Kidney (tissue), 22 donors: ENCODE measurements at regions of chr14 and their contacts with region 1.

Region 1: DNA sequence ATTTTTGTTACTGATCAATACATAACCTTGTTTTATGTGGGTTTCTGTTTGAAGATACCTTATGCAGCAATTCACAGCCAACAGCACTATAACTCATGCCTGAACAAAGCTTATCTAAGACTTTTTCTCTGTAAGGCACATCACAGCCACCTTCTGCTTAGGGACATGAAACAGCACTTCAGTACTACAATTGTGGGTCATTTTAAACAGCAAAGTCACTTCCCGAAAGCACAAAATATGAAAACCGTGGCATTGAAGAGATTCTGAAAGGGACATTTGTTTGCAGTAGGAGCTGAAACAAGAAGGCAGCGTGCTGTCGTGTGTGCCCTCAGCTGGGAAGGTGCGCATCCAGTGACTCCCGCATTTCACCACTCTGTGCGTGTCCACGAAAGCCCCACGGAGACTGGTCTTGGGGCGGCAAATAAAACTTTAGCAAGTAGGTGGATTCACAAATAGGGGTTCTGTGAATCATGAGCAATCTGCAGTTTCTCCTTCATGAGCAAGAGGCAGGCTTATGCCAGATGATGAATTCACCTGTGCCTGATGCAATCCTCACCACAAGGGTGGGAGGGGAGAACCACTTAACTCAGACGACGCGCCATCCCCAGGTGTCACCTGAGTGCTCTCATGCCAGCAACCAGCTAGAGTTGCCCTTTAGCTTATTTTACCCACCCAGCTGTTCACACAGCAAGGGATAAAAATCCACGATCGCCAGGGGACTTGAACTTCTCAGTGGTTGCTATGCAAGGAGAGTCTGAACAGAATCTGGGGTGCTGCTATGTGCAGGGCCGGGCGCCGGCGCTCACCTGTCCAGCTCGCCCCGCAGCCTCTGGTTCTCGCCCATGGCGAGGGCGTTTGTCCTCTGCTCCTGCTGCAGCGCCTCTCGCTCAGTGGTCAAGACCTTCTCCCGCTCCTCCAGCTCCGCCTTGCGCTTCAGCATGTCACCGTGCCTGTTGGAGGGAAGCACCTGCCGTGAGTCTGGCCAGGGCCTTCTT is 54.9 kb upstream of the GPR68 start:
- DNase-seq: peak in 1 of 5 donors; percentile 56
- H3K4me3 ChIP-seq: no peak overlapping the region
- H3K27ac ChIP-seq: no peak overlapping the region
- H3K4me1 ChIP-seq: no peaks in the 10 kb centered on the region
- H3K27me3 ChIP-seq: no peaks in the 10 kb centered on the region
- CTCF ChIP-seq: no peak

Region 2: GRCh38 chr14:90903101-90903500 is 396.3 kb before region 1 on chr14:
- intact Hi-C with region 1: loop called (anchors 10 kb)
- DNase-seq: peak in 4 of 5 donors; percentile 43 to 76 (median 58)
- H3K4me3 ChIP-seq: no peak overlapping the region
- H3K27ac ChIP-seq: no peak overlapping the region
- H3K4me1 ChIP-seq: no peaks in the 10 kb centered on the region
- H3K27me3 ChIP-seq: no peaks in the 10 kb centered on the region
- CTCF ChIP-seq: peak; percentile 80